A673 (cell line): ENCODE measurements at regions of chr10 and their contacts with region 1.

Region 1: DNA sequence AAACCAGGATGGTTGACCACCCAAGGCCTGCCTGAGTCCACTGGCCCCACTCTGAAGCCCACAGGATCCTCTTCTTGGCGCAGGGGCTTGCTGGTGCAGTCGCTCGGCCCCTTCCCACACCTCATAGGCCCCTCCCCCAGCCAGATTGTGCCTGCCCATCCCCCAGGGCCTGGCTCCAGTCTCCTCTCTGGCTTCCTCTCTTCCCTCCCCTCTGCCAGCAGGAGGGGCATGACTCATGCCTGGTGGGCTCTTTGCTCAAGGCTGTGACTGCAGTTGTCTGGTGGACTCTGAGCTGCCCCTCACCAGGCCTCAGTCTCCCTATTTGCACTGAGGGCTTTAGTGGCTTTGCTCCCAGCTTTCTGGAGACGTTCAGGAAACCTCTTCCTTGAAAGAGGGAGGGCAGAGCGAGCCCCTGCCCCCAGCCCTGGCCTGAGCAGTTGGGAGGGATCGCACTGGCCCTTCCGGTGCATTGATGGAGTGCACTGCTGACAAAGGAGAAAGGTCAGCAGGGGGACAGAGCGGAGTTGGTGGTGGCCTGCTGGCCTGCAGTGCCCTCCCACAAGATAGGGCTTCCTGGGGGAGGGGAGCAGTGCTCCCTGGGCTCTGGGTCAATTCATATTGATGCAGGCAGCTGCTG is 60.7 kb downstream of the ZMIZ1 start:
- DNase-seq: peak; percentile 85
- H3K4me3 ChIP-seq: no peak overlapping the region
- H3K27ac ChIP-seq: peak overlapping the region; percentile 64
- H3K4me1 ChIP-seq: peaks cover 38% of the 10 kb centered on the region
- H3K27me3 ChIP-seq: no peaks in the 10 kb centered on the region
- CTCF ChIP-seq: no peak

Region 2: DNA sequence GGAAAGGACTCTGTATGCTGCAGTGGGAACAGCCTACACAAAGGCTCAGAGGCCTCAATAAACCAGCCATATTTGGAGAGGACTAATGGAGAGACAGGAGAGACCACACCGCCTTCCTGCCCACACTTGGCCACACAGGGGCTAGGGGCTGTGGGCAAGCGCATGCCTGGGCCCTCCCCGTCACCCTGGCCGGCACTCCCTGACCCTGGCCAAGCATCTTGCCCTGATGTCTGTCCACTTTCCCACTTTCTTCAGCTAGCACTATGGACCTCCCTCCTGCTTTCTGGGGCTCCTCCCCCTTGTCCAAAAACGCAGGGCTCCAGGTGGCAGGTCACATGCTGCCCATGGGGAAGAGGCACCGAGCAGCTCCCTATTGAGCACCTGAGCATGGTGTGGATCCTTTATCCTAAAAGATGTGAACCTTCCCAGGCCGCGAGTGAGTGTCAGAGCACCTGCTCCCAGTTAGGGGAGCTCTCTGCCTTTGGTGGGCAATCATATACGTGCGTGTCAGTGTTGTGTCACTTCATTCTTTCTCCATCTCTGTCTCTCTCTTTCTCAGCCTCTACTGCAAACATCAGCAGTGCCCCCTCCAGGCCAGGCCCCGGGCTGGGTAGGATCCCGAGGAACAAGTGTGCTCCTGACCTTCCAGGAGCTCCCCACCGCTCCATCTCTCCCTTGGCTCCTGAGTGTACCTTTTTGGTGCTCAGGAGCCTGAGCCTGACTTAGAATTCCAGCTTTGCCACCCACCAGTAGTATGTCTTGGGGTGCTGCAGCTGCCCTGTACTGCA is 13.2 kb after region 1 on chr10:
- CTCF ChIA-PET with region 1: interaction called, 3 read pairs
- POLR2A ChIA-PET with region 1: interaction called, 15 read pairs
- intact Hi-C with region 1: no loop called
- DNase-seq: no peak
- H3K4me3 ChIP-seq: no peak overlapping the region
- H3K27ac ChIP-seq: no peak overlapping the region
- H3K4me1 ChIP-seq: peaks cover 7% of the 10 kb centered on the region
- H3K27me3 ChIP-seq: no peaks in the 10 kb centered on the region
- CTCF ChIP-seq: 0 out of 2 replicates have a peak, but pooled peaks have one; percentile 13